Activated CD4-positive, alpha-beta T cell treated with anti-CD3 and anti-CD28 coated beads for 36 hours (primary cell): ENCODE measurements at regions of chr5 and their contacts with region 1.

Region 1: GRCh38 chr5:116922532-116922931 is 347.9 kb upstream of the SEMA6A start:
- DNase-seq: peak; percentile 5
- ATAC-seq: no peak
- H3K4me3 Mint-ChIP-seq: no peak overlapping the region
- H3K27ac Mint-ChIP-seq: no peak overlapping the region
- H3K4me1 Mint-ChIP-seq: no peaks in the 10 kb centered on the region
- H3K27me3 Mint-ChIP-seq: no peaks in the 10 kb centered on the region

Region 2: DNA sequence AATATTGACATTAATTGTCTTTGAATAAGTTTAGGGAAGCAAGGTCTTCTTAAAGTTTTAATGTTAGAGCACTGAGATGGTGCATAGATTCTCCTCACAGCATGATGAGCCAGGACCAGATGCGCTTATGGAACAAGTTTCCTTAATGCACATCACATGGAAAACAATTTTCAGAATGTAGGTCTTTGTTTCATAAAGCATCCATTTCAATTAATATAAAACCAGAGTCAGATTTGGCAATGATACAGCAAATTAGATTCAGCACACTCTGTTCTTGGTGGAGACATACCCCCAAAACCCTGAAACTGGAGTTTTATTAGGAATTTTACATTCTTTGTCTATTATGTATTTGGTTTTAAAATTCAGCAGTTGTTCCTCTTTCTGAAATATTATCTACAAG is 54.2 kb after region 1 on chr5:
- CTCF ChIA-PET with region 1: no interaction called
- POLR2A ChIA-PET with region 1: no interaction called
- intact Hi-C with region 1: loop called in 1 of 2 experiments (anchors 2 kb)
- DNase-seq: no peak
- ATAC-seq: no peak
- H3K4me3 Mint-ChIP-seq: no peak overlapping the region
- H3K27ac Mint-ChIP-seq: no peak overlapping the region
- H3K4me1 Mint-ChIP-seq: no peaks in the 10 kb centered on the region
- H3K27me3 Mint-ChIP-seq: no peaks in the 10 kb centered on the region